Activated CD8-positive, alpha-beta memory T cell treated with anti-CD3 and anti-CD28 coated beads, Interleukin-2, amount 10 ng/mL, durations not matched to agents 7 days and 5 days (primary cell): ENCODE measurements at regions of chr7 and their contacts with region 1.

Region 1: GRCh38 chr7:150753826-150754603 is 16.8 kb downstream of the GIMAP5 start:
- DNase-seq: no peak
- ATAC-seq: peak; percentile 45
- H3K4me3 Mint-ChIP-seq: no peak overlapping the region
- H3K27ac Mint-ChIP-seq: peak overlapping the region; percentile 97
- H3K4me1 Mint-ChIP-seq: peaks cover 58% of the 10 kb centered on the region
- H3K27me3 Mint-ChIP-seq: no peaks in the 10 kb centered on the region

Region 2: DNA sequence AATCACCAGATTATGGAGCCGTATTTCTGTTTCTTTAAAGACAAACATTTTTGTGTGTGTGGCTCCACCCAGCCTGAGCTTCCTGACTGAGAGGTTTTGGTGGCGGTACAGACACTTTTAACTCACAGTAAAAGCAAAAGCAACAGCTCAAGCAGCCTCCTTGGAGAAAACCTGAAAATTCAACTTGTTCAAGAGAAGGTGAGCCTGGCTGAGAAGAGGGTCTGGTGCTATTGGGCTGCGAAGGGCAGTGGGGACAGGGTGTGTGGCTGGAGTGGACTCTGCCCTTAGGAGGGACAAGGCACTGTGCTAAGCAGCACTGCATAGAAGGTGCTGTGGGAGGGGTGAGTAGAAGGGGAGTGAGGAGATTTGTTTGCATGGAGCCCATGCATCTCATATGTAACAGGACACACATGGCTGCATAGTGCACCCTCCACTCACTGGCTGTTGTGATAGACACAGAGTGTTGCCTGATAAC is 239.2 kb before region 1 on chr7 and contains the start of gene GIMAP7:
- CTCF ChIA-PET with region 1: interaction called, 16 read pairs
- DNase-seq: peak; percentile 83
- ATAC-seq: peak; percentile 74
- H3K4me3 Mint-ChIP-seq: peak within 1 kb of the TSS; percentile 100
- H3K27ac Mint-ChIP-seq: peak within 1 kb of the TSS; percentile 99
- H3K4me1 Mint-ChIP-seq: peaks cover 49% of the 10 kb centered on the region
- H3K27me3 Mint-ChIP-seq: no peaks in the 10 kb centered on the region
- total RNA-seq, gene GIMAP7: 49.9 to 89.7 TPM

Region 3: DNA sequence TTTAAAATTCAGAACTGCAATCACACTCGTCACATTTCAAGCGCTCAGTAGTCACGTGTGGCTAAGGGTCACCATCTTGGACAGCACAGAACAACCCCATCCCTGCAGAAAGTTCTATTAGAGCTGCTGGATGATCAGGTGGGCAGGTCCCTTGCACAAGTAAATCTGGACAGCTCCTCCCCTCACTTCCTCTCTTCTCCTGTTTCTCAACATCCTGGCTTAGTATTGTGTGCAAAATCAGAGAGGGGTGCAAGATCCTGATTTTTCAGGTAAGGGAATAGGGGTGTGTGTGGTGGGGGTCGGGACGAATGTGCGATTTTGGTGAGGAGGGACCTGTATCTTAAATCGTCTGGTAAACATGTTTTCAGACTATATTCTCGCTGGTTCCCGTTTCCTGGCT is 186.8 kb before region 1 on chr7 and contains the start of gene GIMAP4:
- CTCF ChIA-PET with region 1: interaction called, 29 read pairs
- DNase-seq: peak; percentile 58
- ATAC-seq: peak; percentile 68
- H3K4me3 Mint-ChIP-seq: peak within 1 kb of the TSS; percentile 88
- H3K27ac Mint-ChIP-seq: peak within 1 kb of the TSS; percentile 96
- H3K4me1 Mint-ChIP-seq: peaks cover 70% of the 10 kb centered on the region
- H3K27me3 Mint-ChIP-seq: no peaks in the 10 kb centered on the region
- total RNA-seq, gene GIMAP4: 60.5 to 145 TPM

Region 4: DNA sequence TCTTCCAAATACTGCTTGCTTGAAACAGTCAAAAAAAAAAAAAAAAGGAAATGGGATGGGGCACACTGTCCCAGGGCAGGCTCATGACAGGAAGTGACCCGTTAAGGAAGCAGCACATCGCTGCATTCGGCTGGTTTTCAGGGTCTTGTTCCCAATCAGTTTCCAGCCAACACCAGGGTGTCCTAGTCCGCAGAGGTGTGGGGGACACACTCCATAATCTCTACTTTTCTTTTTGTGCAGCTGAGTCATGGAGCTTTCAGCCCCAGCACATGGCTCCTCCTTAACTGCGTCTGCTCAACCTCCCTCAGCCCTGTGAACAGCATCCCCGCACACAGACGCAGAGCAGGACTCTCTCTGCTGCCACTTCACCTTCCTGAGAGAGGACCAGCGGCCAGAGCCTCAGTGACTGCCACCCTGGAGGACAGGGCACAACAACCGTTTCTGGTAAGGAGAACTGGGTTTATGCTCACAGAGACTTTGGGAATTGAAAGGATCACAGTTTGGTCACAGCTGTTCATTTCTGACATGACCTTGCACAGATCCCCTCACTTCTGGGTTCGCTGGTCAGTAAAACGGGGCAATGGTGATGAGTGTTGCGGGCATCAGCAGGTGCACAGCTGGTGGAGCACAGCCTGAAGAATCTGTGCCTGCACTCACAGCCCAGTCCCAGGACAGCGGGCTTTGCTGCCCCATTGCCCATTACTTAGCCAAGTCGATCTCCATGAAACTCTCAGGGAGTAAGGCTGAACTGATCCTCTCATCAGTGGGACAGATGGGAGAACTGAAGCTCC is 16.6 kb before region 1 on chr7 and contains the start of gene GIMAP5:
- CTCF ChIA-PET with region 1: interaction called, 24 read pairs
- DNase-seq: peak; percentile 79
- ATAC-seq: peak; percentile 65
- H3K4me3 Mint-ChIP-seq: peak within 1 kb of the TSS; percentile 94
- H3K27ac Mint-ChIP-seq: peak within 1 kb of the TSS; percentile 98
- H3K4me1 Mint-ChIP-seq: peaks cover 83% of the 10 kb centered on the region
- H3K27me3 Mint-ChIP-seq: no peaks in the 10 kb centered on the region
- total RNA-seq, gene GIMAP5: 41.0 to 42.5 TPM